Upper lobe of right lung (tissue), 1 donor: ENCODE measurements at regions of chr20 and their contacts with region 1.

Region 1: GRCh38 chr20:37411408-37412219 is 65.7 kb downstream of the SRC start:
- DNase-seq: no peak
- ATAC-seq: no peak
- H3K4me3 ChIP-seq: peak overlapping the region; percentile 46
- H3K27ac ChIP-seq: no peak overlapping the region
- H3K4me1 ChIP-seq: peaks cover 4% of the 10 kb centered on the region
- H3K27me3 ChIP-seq: peaks cover 21% of the 10 kb centered on the region
- CTCF ChIP-seq: no peak

Region 2: DNA sequence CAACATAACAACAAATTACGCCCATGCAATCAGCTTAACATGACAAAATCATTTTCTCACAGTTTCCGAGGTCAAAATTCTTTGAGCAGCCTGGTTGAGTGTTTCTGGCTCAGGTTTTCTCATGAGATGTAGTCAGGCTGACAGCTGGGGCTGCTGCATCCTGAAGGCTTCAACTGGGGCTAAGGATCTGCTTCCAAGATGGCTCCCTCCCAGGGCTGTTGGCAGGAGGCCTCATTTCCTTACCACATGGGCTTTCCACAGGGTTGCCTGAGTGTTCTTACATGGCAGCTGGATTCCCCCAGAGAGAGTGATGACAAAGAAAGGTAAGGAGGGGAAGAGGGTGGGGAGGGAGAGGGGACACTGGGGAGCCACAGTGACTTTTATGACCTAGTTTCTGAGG is 46.3 kb after region 1 on chr20:
- intact Hi-C with region 1: no loop called
- DNase-seq: no peak
- ATAC-seq: no peak
- H3K4me3 ChIP-seq: no peak overlapping the region
- H3K27ac ChIP-seq: no peak overlapping the region
- H3K4me1 ChIP-seq: no peaks in the 10 kb centered on the region
- H3K27me3 ChIP-seq: no peaks in the 10 kb centered on the region
- CTCF ChIP-seq: no peak

Region 3: GRCh38 chr20:37519508-37520128 is 108.0 kb after region 1 on chr20:
- intact Hi-C with region 1: loop called (anchors 10 kb)
- DNase-seq: no peak
- ATAC-seq: peak; percentile 3
- H3K4me3 ChIP-seq: no peak overlapping the region
- H3K27ac ChIP-seq: no peak overlapping the region
- H3K4me1 ChIP-seq: peaks cover 51% of the 10 kb centered on the region
- H3K27me3 ChIP-seq: no peaks in the 10 kb centered on the region
- CTCF ChIP-seq: peak; percentile 7